H1 (cell line): ENCODE measurements at regions of chr6 and their contacts with region 1.

Region 1: DNA sequence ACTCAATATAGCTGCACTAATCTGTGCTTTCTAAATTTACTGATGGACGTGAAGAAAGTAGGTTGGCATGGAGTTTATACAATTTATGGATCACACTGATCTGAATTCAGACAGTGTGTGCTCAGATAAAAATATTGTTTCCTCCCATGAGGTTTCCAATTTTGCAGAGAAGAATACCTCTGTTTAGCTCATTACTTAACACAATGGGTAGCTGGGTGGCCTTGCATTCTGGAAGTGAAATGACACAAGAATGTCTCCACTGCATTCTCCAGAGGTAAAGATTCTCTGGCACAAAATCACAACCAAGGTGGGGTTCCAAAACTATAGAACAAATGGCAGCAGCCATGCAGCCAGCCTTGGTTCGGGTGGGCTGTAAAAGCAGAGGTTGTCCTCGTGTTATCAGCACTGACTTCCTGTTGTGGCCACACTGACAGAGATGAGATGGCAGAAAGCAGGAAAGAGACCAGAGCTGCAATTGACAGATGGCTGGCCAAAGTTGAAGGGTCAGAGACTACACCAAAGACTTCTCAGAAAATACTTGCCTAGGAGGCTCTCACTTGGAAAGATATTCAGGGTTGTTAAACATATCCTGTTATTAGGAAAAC is 50.2 kb downstream of the HDAC2 start:
- DNase-seq: no peak
- H3K4me3 ChIP-seq: no peak overlapping the region
- H3K27ac ChIP-seq: no peak overlapping the region
- H3K4me1 ChIP-seq: no peaks in the 10 kb centered on the region
- H3K27me3 ChIP-seq: peaks cover 0 to 1% (median 0%) of the 10 kb centered on the region in 4 experiments; a peak in 1 of 7 replicates
- CTCF ChIP-seq: no peak
- EP300 ChIP-seq: no peak
- POLR2A ChIP-seq: no peak
- RAD21 ChIP-seq: no peak

Region 2: DNA sequence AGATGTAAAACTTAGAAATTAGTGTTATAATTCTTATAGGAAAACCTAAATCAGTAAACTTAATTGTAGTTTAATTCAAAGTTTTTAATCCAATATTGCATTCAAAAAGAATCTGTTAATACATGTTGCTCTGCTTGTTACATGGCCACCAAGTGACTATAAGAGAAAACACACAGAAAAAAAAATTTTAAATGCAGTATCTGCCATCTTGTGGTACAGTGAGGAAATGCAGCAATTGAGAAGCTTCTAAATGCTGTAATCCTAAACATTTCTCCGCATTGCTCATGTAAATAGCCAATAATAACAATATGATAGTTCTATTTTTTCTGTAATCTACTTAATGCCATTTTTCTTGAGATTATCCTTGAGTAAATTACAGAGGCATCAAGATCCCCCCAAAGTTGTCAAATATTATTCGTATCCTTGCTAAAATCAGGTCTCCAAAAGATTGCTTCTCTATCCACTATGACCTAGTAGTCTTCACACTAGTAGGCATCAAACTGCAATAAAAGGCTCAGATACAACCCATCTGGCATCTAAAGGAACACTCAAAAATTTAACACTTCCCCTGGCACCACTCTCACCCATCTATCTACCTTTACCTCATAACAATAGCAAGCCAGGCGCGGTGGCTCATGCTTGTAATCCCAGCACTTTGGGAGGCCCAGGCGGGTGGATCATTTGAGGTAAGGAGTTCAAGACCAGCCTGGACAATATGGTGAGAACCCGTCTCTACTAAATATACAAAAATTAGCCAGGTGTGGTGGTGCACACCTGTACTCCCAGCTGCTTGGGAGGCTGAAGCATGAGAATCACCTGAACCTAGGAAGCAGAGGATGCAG is 15.5 kb after region 1 on chr6:
- CTCF ChIA-PET with region 1: interaction called, 15 read pairs
- POLR2A ChIA-PET with region 1: no interaction called
- DNase-seq: no peak
- H3K4me3 ChIP-seq: no peak overlapping the region
- H3K27ac ChIP-seq: no peak overlapping the region
- H3K4me1 ChIP-seq: no peaks in the 10 kb centered on the region
- H3K27me3 ChIP-seq: no peaks in the 10 kb centered on the region
- CTCF ChIP-seq: peak in 2 of 3 experiments; percentile 63 to 66; a peak in 2 of 4 replicates
- EP300 ChIP-seq: no peak
- POLR2A ChIP-seq: no peak
- RAD21 ChIP-seq: peak; percentile 51 to 55